Ascending aorta (tissue), 2 donors: ENCODE measurements at regions of chr17 and their contacts with region 1.

Region 1: DNA sequence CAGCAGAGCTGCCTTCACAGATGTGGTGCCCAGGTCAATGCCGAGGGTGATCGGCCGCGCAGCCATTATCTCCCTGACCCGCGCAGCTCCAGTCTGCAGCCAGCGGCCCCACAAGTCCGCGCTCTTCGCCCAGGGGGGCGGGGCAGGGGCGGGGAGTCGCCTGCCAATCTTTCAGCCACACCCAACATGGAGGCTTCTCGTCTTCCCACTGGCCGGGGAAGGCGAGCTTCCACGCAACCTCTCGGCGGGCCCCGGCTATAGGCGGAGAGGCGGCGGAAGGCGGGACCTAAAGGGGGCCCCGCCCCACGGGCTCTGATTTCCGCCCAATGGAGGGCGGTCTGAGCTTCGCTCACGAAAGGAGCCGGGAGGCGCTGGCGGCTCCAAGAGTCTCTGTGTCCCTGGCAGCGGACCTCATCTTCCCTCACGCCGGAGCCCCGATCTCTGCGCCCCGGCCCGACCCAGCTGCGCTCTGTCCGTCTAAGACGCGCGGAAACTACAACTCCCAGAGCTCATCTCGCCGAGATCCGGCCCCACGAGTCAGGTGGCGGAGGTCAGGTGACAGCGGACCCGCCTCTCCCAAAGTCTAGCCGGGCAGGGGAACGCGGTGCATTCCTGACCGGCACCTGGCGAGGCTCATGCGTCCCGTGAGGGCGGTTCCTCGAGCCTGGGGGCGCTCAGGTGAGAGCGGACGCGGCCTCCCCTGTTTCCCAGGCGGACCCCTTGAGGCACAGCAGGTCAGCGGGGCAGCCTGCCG is at the starts of genes CTNS and SHPK:
- DNase-seq: peak; percentile 90 to 98
- H3K4me3 ChIP-seq: peak within 1 kb of the TSS; percentile 84 to 85
- H3K27ac ChIP-seq: peak within 1 kb of the TSS; percentile 92 to 96
- H3K4me1 ChIP-seq: peaks cover 11 to 15% of the 10 kb centered on the region in 2 donors
- H3K27me3 ChIP-seq: no peaks in the 10 kb centered on the region
- CTCF ChIP-seq: no peak
- total RNA-seq, gene CTNS: 16.7 TPM
- total RNA-seq, gene SHPK: 0.32 TPM

Region 2: DNA sequence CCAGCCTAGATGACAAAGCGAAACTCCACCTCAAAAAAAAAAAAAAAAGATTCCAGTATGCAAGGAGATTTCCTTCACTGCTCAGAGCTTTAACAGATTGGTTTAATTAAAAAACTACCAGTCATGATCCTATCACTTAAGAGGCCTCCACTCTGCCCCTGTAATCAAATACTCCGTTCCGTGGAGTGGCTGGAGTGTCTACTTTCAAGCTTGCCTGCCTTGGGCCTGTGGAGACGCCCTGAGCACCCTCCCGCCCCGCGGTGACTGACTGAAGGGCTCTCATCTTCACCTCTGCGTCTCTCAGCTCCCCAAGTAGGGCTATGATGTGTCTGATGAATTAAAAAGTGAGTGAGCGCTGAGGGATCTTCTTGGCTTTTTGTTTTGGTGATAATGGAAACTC is 53.4 kb before region 1 on chr17:
- intact Hi-C with region 1: no loop called
- DNase-seq: no peak
- H3K4me3 ChIP-seq: no peak overlapping the region
- H3K27ac ChIP-seq: no peak overlapping the region
- H3K4me1 ChIP-seq: no peaks in the 10 kb centered on the region
- H3K27me3 ChIP-seq: no peaks in the 10 kb centered on the region
- CTCF ChIP-seq: no peak

Region 3: DNA sequence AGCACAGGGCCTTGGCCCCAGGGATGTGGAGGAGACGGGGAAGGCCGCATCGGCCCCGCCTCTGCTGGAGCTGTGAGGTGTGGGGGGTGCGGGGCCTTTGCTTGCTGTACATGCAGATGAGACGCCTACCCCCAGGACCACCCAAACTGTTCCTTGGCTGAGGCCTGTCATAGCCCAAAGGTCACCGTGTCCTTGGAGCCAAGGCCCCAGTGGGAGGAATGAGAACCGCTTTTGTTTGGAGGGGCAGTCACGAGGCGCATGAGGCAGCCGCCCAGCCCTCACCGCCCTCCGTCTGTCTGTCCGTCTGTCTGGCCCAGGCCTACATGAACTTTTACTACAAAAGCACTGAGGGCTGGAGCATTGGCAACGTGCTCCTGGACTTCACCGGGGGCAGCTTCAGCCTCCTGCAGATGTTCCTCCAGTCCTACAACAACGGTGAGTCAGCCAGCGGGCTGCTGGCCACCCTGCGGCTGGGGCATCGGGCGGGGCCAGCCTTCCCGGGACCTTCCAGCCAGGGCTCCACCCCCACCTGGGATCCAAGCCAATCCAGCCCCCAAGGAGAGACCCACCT is 23.3 kb after region 1 on chr17:
- intact Hi-C with region 1: no loop called
- DNase-seq: peak; percentile 40 to 88
- H3K4me3 ChIP-seq: no peak overlapping the region
- H3K27ac ChIP-seq: peak overlapping the region; percentile 74 to 87
- H3K4me1 ChIP-seq: peaks cover 9 to 18% of the 10 kb centered on the region in 2 donors
- H3K27me3 ChIP-seq: no peaks in the 10 kb centered on the region
- CTCF ChIP-seq: peak in 1 of 3 experiments; percentile 16

Region 4: DNA sequence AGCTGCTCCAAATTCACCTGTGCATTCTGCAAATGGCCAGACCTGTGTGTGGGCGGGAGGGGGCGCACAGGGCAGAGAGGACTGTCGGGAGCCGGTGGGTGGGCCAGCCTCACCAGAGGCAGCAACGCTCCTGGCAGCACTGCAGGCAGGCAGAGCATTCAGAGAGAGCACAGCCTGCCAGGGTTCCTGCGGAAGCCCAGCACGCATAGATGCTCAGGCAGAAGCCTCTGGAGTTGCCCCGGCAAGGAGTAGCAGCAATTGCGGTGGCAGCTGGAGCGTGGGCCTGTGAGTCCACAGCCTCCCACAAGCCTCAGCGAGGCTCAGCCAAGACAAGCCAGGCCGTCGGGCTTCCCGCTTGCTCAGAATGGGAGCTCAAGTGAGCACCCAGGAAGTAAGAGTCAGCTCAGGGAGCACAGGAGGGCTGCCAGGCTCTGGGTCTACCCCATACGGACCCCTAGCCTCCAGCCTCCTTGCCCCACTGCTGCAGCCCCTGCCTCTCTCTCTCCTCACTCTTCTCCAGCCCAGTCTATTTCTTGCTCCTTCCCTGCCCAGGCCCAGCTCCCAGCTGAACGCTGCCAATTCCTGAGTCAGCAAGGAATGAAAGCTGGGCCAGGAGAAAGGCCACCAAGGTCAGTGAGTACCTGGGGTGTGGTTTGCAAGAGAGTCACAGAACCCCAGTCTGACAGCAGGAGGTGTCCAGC is 41.9 kb after region 1 on chr17:
- intact Hi-C with region 1: no loop called
- DNase-seq: no peak
- H3K4me3 ChIP-seq: no peak overlapping the region
- H3K27ac ChIP-seq: no peak overlapping the region
- H3K4me1 ChIP-seq: no peaks in the 10 kb centered on the region
- H3K27me3 ChIP-seq: no peaks in the 10 kb centered on the region
- CTCF ChIP-seq: no peak

Region 5: DNA sequence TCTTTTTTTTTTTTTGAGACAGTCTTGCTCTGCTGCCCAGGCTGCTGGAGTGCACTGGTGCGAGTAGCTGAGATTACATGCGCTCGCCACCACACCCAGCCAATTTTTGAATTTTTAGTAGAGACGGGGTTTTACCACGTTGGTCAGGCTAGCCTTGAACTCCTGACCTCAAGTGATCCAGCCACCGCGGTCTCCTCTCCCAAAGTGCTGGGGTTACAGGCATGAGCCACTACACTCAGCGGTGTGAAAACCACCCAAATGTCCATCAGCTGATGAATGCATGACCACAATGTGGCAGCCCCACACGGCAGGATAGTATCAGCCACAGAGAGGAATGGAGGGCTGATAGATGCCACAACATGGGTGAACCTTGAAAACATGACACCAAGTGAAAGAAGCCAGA is 57.5 kb after region 1 on chr17:
- intact Hi-C with region 1: no loop called
- DNase-seq: no peak
- H3K4me3 ChIP-seq: no peak overlapping the region
- H3K27ac ChIP-seq: no peak overlapping the region
- H3K4me1 ChIP-seq: peaks cover 5% of the 10 kb centered on the region in 2 donors
- H3K27me3 ChIP-seq: peaks cover 8% of the 10 kb centered on the region
- CTCF ChIP-seq: no peak

Region 6: GRCh38 chr17:3723556-3724369 is 87.4 kb after region 1 on chr17 and contains the start of gene HASPIN:
- intact Hi-C with region 1: loop called (anchors 10 kb)
- DNase-seq: peak; percentile 45 to 91
- H3K4me3 ChIP-seq: peak within 1 kb of the TSS; percentile 58 to 77
- H3K27ac ChIP-seq: peak within 1 kb of the TSS; percentile 72 to 75
- H3K4me1 ChIP-seq: peaks cover 7 to 11% of the 10 kb centered on the region in 2 donors
- H3K27me3 ChIP-seq: no peaks in the 10 kb centered on the region
- CTCF ChIP-seq: peak; percentile 8 to 37 (median 17)
- total RNA-seq, gene HASPIN: 2.7 TPM